CD14-positive monocyte (primary cell): ENCODE measurements at regions of chr18 and their contacts with region 1.

Region 1: DNA sequence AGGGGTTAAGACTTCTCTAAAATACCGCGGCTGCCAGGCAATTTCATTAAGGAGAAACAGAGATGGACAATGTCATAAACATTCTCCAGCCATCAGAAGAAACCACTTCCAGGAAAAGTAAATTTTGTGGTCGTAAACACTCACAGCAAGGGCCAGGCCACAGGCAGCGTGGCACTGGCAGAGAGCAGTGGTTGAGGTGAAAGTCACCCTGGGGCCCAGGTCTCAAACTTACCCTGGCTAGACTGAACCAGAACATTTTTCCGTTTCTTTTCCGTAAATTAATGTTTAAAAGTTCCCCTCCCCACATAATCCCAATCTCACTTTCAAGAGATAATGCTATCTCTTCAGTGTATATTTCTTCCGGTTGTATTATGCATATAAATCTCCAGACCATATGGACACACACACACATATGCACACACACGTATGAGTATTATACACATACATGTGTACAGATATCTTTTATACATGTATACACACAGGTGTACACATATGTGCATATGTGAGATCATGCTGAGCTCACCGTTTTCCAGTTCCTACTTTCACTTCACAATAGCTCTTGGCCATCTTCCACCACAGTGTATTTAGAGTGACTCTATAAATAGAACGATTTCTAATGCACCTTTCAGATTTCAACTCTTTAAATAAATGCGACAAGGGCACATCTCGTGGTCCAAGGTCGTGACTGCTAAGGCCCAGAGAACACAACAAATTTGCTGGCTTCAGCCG is 90.1 kb downstream of the MALT1 start:
- DNase-seq: no peak
- H3K4me3 ChIP-seq: no peak overlapping the region
- H3K4me3 Mint-ChIP-seq: no peak overlapping the region
- H3K27ac ChIP-seq: no peak overlapping the region
- H3K27ac Mint-ChIP-seq: no peak overlapping the region
- H3K4me1 ChIP-seq: no peaks in the 10 kb centered on the region
- H3K4me1 Mint-ChIP-seq: peaks cover 4% of the 10 kb centered on the region
- H3K27me3 ChIP-seq: no peaks in the 10 kb centered on the region
- H3K27me3 Mint-ChIP-seq: peaks cover 17 to 38% (median 19%) of the 10 kb centered on the region in 3 donors
- CTCF ChIP-seq: no peak

Region 2: DNA sequence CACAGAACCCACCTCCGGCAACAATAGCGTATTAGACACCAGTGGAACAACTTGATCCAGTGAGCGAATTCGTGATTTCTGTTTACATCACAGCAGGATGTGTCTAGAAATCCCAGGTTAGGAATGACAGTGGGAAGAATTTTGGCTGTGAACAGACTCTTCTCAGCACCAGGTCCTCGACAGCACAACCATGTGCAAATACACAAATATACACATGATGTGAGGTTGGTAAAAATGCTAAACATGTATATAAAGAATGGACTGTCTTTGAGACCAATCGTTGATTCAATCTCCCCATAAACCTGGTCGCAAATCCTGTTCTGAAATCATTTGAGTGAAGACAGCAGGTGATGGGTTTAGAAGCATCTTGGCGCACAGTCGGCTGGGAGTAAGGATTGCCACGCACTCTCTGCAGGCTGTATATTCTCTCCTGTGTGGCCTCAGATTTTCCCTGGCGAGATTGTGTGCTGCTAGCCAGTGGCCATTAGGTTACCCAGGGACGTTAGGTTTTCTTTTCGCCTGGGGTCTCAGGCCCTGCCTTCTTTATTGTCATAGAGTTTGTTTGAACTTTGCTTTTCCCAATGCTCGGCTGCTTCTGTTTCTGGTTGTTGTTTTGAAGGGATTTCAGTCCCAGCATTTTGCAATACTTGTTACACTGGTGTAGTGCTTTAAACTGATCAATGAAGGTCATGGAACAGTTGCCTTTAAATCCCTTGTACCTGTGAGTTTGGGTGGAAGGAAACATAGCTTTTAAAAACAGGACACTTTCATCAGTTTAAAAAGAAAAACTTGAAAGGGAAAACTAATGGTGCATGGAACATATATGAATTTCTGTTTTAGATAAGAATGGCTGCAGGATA is 279.9 kb before region 1 on chr18:
- intact Hi-C with region 1: no loop called
- DNase-seq: no peak
- H3K4me3 ChIP-seq: no peak overlapping the region
- H3K4me3 Mint-ChIP-seq: no peak overlapping the region
- H3K27ac ChIP-seq: no peak overlapping the region
- H3K27ac Mint-ChIP-seq: no peak overlapping the region
- H3K4me1 ChIP-seq: no peaks in the 10 kb centered on the region
- H3K4me1 Mint-ChIP-seq: peaks cover 7% of the 10 kb centered on the region
- H3K27me3 ChIP-seq: peaks cover 0 to 6% of the 10 kb centered on the region in 2 donors
- H3K27me3 Mint-ChIP-seq: peaks cover 4 to 21% (median 10%) of the 10 kb centered on the region in 3 donors
- CTCF ChIP-seq: no peak

Region 3: DNA sequence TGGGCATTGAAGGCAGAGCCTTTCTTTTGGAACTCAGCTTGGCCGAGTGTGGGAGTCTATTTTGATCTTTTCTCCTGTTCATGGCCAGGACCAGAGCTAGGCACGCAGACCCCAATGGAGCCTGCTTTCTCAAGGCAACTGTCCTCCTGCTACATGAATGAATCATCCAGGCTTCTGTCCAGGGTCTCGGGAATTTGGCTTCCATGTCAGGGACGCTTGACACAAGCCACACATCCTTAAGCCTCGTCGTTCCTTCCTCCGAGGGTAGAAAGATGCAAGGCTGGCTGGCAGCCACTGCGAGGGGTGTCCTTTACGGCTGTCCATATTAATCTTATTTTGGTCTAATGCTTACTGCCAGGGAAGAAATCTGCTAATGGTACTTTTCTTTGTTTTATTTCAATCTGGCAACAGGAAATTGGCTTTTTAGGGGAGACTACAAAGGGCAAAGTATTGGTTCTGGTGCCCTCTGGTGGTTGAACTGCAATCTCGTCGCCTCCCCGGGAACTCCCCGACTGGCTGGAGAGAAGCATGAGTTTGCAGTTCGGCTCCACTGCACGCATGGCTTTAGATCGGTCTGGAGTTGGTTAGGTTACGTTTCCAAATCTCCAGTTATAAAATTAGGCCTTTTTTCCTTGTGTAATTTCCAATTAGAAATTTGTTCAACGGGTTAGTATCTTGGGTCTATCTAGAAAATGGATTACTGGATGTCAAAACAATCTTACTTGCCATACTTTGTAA is 267.7 kb before region 1 on chr18:
- intact Hi-C with region 1: loop called (anchors 5 kb)
- DNase-seq: peak; percentile 59 to 78 (median 67)
- H3K4me3 ChIP-seq: no peak overlapping the region
- H3K4me3 Mint-ChIP-seq: peak overlapping the region in 1 of 2 donors; percentile 61
- H3K27ac ChIP-seq: no peak overlapping the region
- H3K27ac Mint-ChIP-seq: peak overlapping the region in 1 of 7 donors; percentile 62
- H3K4me1 ChIP-seq: no peaks in the 10 kb centered on the region
- H3K4me1 Mint-ChIP-seq: peaks cover 3% of the 10 kb centered on the region
- H3K27me3 ChIP-seq: peaks cover 0 to 11% of the 10 kb centered on the region in 2 donors
- H3K27me3 Mint-ChIP-seq: peaks cover 22 to 26% (median 25%) of the 10 kb centered on the region in 3 donors
- CTCF ChIP-seq: peak; percentile 90